Mucosa of descending colon (tissue), 3 donors: ENCODE measurements at regions of chr1 and their contacts with region 1.

Region 1: GRCh38 chr1:156383023-156383422 is 14.0 kb downstream of the RHBG start:
- DNase-seq: peak in 2 of 3 donors; percentile 67 to 69
- ATAC-seq: peak; percentile 85
- H3K4me3 ChIP-seq: no peak overlapping the region
- H3K4me1 ChIP-seq: no peaks in the 10 kb centered on the region
- CTCF ChIP-seq: peak; percentile 57

Region 2: DNA sequence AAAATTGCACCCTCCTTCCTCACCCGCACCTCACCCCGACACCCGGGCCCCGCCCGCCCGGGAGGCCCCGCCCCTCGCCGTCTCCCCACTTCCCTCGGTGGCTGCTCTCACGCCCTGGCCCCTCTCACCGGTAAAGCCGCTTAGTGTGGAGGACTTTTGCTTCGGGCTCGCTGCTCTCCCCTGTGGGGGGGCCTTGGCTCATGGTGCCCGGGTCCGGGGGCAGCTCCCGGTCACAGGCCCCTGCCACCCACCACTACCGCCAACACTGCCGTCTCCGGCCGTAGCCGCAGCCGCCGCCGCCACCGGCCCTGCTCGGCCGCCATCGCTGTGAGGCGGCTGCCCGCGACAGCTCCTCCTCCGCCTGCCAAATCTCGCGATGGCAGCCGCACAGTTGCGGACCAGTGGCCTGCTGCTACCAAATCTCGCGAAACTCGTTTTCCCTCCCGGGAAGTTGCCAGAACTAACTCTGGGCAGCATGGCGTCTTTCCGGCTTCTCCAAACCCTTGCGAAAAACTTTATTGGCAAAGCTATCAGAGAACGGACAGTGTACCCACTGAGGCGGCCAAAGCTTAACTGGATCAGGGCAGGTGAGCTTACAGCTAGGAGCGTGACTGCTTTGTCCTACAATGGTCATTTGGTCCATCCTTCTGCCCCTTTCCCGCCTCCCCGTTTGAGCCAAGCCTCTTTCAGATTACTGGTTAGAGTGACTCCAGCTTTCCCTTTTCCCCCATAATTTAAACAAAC is 100.4 kb before region 1 on chr1 and contains the start of gene SMG5:
- intact Hi-C with region 1: no loop called
- DNase-seq: peak; percentile 96 to 97 (median 97)
- ATAC-seq: peak; percentile 94
- H3K4me3 ChIP-seq: peak within 1 kb of the TSS; percentile 77
- H3K4me1 ChIP-seq: peaks cover 21% of the 10 kb centered on the region
- CTCF ChIP-seq: no peak
- total RNA-seq, gene SMG5: 72.9 to 89.5 (median 81.1) TPM

Region 3: DNA sequence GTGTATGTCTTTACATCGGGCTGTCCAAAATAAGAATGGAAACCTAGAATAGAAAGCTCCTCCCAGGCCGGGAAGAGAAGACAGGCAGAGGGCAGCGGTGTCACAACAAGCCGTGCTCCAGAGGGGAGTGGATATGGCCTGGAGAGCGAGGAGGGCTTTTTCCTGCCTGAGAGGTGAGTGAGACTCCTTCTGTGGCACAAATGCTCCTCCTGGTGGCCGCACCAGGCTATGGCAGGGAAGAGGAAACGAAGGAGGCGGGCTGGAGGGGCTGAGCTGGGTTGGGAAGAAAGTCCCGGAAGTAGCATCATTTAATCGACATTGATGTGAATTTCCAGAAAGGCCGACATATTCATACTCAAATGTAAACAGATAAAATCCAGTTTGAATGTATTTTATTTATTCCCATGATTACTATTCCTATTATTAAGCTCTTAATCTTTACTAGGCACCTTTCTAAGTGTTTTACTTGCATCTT is 62.8 kb after region 1 on chr1:
- intact Hi-C with region 1: loop called (anchors 2 to 5 kb)
- DNase-seq: peak; percentile 76 to 90 (median 86)
- ATAC-seq: peak; percentile 98
- H3K4me3 ChIP-seq: no peak overlapping the region
- H3K4me1 ChIP-seq: no peaks in the 10 kb centered on the region
- CTCF ChIP-seq: peak; percentile 93

Region 4: DNA sequence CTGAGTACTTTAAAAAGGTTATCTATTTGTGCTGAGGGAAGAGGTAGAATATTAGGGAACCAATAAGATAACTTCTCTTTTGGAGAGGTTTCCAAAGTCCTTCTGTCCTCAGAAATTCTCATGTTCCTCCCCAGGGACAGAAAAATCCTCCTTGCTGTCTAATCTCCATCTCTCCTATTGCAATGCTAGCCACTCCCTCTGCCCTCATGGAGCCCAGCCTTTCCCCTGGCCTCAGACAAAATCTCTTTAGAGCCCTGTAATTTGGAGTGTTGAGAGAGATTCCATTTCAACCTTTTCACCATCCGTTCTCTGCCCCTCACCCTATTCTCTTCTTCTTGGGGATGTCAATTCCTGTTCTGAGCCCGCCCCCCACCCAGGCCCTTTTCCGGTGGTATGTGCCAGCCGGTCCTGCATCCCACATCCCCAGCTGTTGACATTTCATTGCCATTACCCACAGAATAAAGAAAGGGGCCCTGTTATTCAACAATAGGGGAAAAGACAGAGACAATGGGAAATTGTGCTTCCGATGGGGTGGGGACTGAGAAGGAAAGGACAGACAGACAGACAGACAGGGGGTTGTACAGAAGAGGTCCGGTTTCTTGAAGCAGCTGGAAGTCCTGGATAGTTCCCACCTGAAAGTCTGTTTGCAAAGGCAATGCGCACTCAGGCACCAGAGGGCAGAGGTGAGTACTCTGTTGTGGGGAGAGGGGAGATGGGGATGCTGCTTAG is 236.0 kb after region 1 on chr1 and contains the start of gene HAPLN2:
- intact Hi-C with region 1: loop called in 1 of 2 experiments (anchors 10 kb)
- DNase-seq: no peak
- ATAC-seq: no peak
- H3K4me3 ChIP-seq: no peak within 1 kb of the TSS
- H3K4me1 ChIP-seq: peaks cover 3% of the 10 kb centered on the region
- CTCF ChIP-seq: no peak
- total RNA-seq, gene HAPLN2: 0.28 TPM in 1 of 3 donors, not detected in the others